CD4-positive, alpha-beta memory T cell (primary cell): ENCODE measurements at regions of chr11 and their contacts with region 1.

Region 1: GRCh38 chr11:65404638-65405339 is 17.8 kb upstream of the NEAT1 start:
- DNase-seq: peak in 1 of 5 donors; percentile 12
- H3K4me3 ChIP-seq: no peak overlapping the region
- H3K4me3 Mint-ChIP-seq: no peak overlapping the region
- H3K27ac ChIP-seq: no peak overlapping the region
- H3K27ac Mint-ChIP-seq: peak overlapping the region in 1 of 7 donors; percentile 57
- H3K4me1 ChIP-seq: no peaks in the 10 kb centered on the region
- H3K4me1 Mint-ChIP-seq: peaks cover 0 to 6% (median 1%) of the 10 kb centered on the region in 4 donors
- H3K27me3 ChIP-seq: no peaks in the 10 kb centered on the region
- H3K27me3 Mint-ChIP-seq: no peaks in the 10 kb centered on the region

Region 2: DNA sequence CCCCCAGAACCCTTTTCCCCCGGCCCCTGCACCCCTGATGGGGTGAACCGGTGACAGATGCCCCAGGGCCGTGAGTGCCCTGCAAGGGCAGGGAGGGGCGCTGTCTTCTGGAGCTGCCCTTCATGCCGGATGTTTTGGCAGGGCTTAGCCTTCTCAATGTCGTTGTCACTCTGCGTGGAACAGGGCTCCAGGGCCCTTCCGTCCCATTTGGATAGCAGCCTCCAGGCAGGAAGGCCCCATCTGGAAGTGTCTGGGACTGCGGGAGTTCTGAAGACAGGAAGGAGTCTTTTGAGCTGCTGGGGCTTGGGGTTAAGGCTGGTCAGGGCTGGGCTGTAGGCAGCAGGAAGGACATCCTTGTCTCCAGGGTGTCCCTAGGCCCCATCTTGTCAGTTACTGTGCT is 13.8 kb before region 1 on chr11:
- CTCF ChIA-PET with region 1: no interaction called
- POLR2A ChIA-PET with region 1: interaction called, 524 read pairs
- intact Hi-C with region 1: no loop called
- DNase-seq: no peak
- H3K4me3 ChIP-seq: no peak overlapping the region
- H3K4me3 Mint-ChIP-seq: peak overlapping the region in 2 of 8 donors; percentile 15 to 52
- H3K27ac ChIP-seq: no peak overlapping the region
- H3K27ac Mint-ChIP-seq: peak overlapping the region in 2 of 7 donors; percentile 42 to 61
- H3K4me1 ChIP-seq: peaks cover 51% of the 10 kb centered on the region
- H3K4me1 Mint-ChIP-seq: peaks cover 17 to 56% (median 32%) of the 10 kb centered on the region in 4 donors
- H3K27me3 ChIP-seq: no peaks in the 10 kb centered on the region
- H3K27me3 Mint-ChIP-seq: no peaks in the 10 kb centered on the region

Region 3: GRCh38 chr11:65471410-65471762 is 66.6 kb after region 1 on chr11:
- CTCF ChIA-PET with region 1: no interaction called
- POLR2A ChIA-PET with region 1: no interaction called
- intact Hi-C with region 1: no loop called
- DNase-seq: no peak
- H3K4me3 ChIP-seq: no peak overlapping the region
- H3K4me3 Mint-ChIP-seq: peak overlapping the region in 1 of 8 donors; percentile 74
- H3K27ac ChIP-seq: peak overlapping the region; percentile 74
- H3K27ac Mint-ChIP-seq: peak overlapping the region; percentile 88 to 99 (median 98)
- H3K4me1 ChIP-seq: peaks cover 18% of the 10 kb centered on the region
- H3K4me1 Mint-ChIP-seq: peaks cover 12 to 27% (median 22%) of the 10 kb centered on the region in 4 donors
- H3K27me3 ChIP-seq: no peaks in the 10 kb centered on the region
- H3K27me3 Mint-ChIP-seq: no peaks in the 10 kb centered on the region

Region 4: GRCh38 chr11:65599955-65600246 is 195.1 kb after region 1 on chr11:
- CTCF ChIA-PET with region 1: no interaction called
- POLR2A ChIA-PET with region 1: no interaction called
- intact Hi-C with region 1: no loop called
- DNase-seq: no peak
- H3K4me3 ChIP-seq: no peak overlapping the region
- H3K4me3 Mint-ChIP-seq: no peak overlapping the region
- H3K27ac ChIP-seq: no peak overlapping the region
- H3K27ac Mint-ChIP-seq: no peak overlapping the region
- H3K4me1 ChIP-seq: peaks cover 13% of the 10 kb centered on the region
- H3K4me1 Mint-ChIP-seq: peaks cover 8 to 17% (median 9%) of the 10 kb centered on the region in 4 donors
- H3K27me3 ChIP-seq: no peaks in the 10 kb centered on the region
- H3K27me3 Mint-ChIP-seq: no peaks in the 10 kb centered on the region